ENCODE measurements at regions of chr5 and their contacts with region 1.

Region 1: DNA sequence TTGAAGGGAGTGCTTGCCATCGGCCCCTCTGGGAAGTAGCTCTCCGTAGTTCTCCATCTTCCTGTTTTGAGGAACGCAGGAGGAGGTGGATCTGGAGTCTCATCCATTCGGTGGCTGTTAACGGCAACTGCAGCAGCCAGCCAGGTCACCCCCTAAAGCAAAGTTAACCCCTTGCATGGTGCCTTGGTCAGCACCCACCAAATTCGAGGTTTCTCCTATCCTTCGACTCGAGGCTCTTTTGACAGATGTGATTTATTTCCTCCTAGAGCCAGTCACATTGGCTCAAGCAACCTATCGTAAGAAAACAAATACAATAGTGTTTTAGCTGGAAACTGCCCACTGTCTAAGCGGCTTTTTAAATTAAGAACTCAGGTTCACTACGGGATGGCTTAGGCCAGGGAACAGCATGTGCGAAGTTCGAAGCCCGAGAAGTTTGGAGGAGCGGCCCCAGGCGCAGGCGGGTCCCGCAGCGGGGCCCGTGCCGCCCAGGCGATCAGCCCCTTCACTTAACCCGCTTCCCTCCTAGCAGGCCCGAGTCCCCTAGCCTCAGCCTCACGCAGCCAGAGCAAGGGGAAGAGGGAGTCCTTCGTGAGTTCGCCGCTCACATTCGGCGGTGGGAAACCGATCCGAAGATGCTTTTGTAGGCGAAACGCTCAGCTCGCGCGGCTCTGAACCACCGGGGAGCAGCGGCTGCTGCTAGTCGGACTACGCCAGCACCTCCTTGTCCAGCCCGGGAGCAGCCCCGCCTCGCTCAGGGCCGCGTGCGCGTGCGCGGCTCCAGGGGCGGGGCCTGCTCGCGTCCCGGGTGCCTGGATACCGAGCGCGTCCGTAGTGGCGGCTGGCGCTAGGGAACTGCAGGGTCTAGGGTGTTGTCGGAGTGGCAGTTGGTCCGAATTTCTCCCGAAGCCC is at the start of gene ROPN1L:
- ATAC-seq: peak; percentile 91 to 98 (median 97)
- H3K4me3 ChIP-seq: peak within 1 kb of the TSS; percentile 54 to 71 (median 62)
- H3K27ac ChIP-seq: peak within 1 kb of the TSS; percentile 76 to 81
- H3K4me1 ChIP-seq: peaks cover 3 to 4% of the 10 kb centered on the region in 2 donors
- total RNA-seq, gene ROPN1L: 1.1 to 25.7 (median 2.2) TPM in 7 of 8 experiments, not detected in the other

Region 2: DNA sequence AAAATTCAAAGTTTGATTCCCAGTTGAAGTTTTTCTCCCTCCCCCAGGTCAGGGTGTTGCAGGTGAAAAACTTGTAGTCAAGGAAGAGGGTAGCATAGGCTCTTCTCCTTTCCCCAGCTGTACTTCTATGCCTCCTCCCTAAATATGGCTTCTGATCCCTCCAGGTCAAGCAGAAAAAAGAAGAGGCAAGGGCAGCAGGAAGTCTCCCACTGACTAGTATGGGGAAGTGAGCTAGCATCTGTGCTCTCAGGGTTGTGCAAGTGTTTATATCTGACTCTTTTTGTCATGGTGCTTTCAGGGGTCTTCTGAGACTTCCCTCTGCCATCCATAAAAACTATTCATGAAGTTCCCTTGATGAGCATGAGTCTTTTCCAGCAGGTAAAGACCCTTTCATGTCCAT is 267.6 kb before region 1 on chr5:
- in situ Hi-C with region 1: no loop called
- ATAC-seq: no peak
- H3K4me3 ChIP-seq: no peak overlapping the region
- H3K27ac ChIP-seq: no peak overlapping the region
- H3K4me1 ChIP-seq: no peaks in the 10 kb centered on the region

Region 3: DNA sequence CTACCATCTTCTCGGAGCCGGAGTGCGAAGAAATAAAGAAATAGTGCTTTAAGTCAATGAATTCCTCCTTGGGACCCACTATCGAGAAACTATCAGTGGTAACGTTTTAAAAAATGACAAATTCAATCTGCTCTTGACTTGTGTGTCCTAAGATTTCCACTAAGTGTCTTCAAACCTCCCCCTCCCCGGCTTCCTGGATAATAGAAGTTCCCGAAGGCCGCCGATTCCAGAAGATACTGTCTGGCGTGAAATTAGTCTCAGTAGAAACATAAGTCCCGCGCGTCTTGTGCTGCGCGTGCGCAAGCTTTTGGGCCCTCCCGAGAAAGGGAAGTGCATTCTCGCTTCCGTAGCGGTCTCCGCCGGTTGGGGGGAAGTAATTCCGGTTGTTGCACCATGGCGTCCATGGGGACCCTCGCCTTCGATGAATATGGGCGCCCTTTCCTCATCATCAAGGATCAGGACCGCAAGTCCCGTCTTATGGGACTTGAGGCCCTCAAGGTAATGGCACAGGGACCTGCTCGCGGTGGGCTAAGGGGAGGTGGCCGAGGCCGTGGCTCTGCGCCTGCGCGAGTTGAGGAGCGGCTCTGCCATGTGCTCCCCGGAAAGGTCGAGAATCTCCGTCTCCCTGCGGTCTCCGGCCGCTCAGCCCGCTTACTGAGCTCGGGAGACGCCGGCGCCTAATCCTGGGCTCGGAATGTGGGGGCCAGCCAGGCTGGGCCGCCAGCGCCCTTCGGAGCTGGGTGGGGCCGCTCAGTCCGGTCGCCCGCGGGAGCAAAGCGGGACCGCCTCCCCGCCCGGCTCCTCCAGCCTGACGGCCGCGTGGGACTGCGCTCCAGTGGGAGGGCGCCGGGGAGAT is 191.2 kb before region 1 on chr5 and contains the start of gene CCT5:
- in situ Hi-C with region 1: loop called in 1 of 9 experiments (anchors 25 kb)
- ATAC-seq: peak; percentile 72 to 85 (median 78)
- H3K4me3 ChIP-seq: peak within 1 kb of the TSS; percentile 57 to 99 (median 73)
- H3K27ac ChIP-seq: peak within 1 kb of the TSS; percentile 97 to 99
- H3K4me1 ChIP-seq: peaks cover 13 to 14% of the 10 kb centered on the region in 2 donors
- total RNA-seq, gene CCT5: 183 to 475 (median 297) TPM